Activated naive CD4-positive, alpha-beta T cell treated with anti-CD3 and anti-CD28 coated beads, Interleukin-2, amount 10 ng/mL, durations not matched to agents 7 days and 5 days (primary cell): ENCODE measurements at regions of chr15 and their contacts with region 1.

Region 1: GRCh38 chr15:44519537-44519936 is 17.4 kb upstream of the EIF3J start:
- DNase-seq: no peak
- H3K4me3 Mint-ChIP-seq: no peak overlapping the region
- H3K27ac Mint-ChIP-seq: no peak overlapping the region
- H3K4me1 Mint-ChIP-seq: peaks cover 2% of the 10 kb centered on the region
- H3K27me3 Mint-ChIP-seq: no peaks in the 10 kb centered on the region

Region 2: GRCh38 chr15:44532689-44533088 is 13.2 kb after region 1 on chr15:
- CTCF ChIA-PET with region 1: interaction called, 11 read pairs
- DNase-seq: no peak
- H3K4me3 Mint-ChIP-seq: no peak overlapping the region
- H3K27ac Mint-ChIP-seq: peak overlapping the region; percentile 14
- H3K4me1 Mint-ChIP-seq: peaks cover 20% of the 10 kb centered on the region
- H3K27me3 Mint-ChIP-seq: no peaks in the 10 kb centered on the region

Region 3: DNA sequence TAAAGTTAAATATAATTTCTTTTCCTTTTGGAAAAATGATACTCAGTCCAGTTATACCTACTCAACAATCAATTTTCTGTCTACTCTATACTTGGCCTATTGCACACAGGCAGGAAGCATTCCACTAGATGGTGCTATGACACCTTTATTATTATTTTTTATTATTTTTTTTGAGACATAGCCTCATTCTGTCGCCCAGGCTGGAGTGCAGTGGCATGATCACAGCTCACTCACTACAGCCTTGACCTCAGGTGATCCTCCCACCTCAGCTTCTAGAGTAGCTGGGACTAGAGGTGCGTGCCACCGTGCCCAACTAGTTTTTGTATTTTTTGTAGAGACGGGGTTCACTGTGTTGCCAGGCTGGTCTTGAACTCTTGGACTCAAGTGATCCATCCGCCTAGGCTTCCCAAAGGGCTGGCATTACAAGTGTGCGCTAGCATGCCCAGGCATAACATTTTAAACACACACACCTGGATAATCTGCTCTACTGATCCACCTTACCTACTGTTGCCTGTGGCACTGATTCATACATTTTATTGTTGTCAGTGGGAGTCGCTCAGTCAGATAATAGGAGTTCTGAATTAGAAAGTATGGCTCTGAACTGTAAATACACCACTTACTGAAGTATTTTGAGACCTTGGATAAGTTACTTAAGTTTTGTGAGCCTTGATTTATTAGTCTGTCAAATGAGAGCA is 73.7 kb after region 1 on chr15:
- CTCF ChIA-PET with region 1: no interaction called
- DNase-seq: peak; percentile 39
- H3K4me3 Mint-ChIP-seq: no peak overlapping the region
- H3K27ac Mint-ChIP-seq: peak overlapping the region; percentile 38
- H3K4me1 Mint-ChIP-seq: peaks cover 29% of the 10 kb centered on the region
- H3K27me3 Mint-ChIP-seq: no peaks in the 10 kb centered on the region